ENCODE measurements at regions of chr20 and their contacts with region 1.

Region 1: GRCh38 chr20:2172305-2173175 is 70.9 kb downstream of the STK35 start:
- DNase-seq: peak; percentile 84
- H3K4me3 Mint-ChIP-seq: no peak overlapping the region
- H3K27ac Mint-ChIP-seq: no peak overlapping the region
- H3K4me1 Mint-ChIP-seq: peaks cover 3% of the 10 kb centered on the region
- H3K27me3 Mint-ChIP-seq: peaks cover 3% of the 10 kb centered on the region

Region 2: GRCh38 chr20:1764136-1765033 is 408.2 kb before region 1 on chr20:
- CTCF ChIA-PET with region 1: interaction called, 6 read pairs
- intact Hi-C with region 1: loop called (anchors 1 kb)
- DNase-seq: peak; percentile 82
- H3K4me3 Mint-ChIP-seq: no peak overlapping the region
- H3K27ac Mint-ChIP-seq: no peak overlapping the region
- H3K4me1 Mint-ChIP-seq: peaks cover 2% of the 10 kb centered on the region
- H3K27me3 Mint-ChIP-seq: no peaks in the 10 kb centered on the region

Region 3: GRCh38 chr20:1965520-1966351 is 206.8 kb before region 1 on chr20:
- CTCF ChIA-PET with region 1: interaction called, 61 read pairs
- intact Hi-C with region 1: loop called (anchors 1 kb)
- DNase-seq: peak; percentile 89
- H3K4me3 Mint-ChIP-seq: peak overlapping the region; percentile 54
- H3K27ac Mint-ChIP-seq: peak overlapping the region; percentile 43
- H3K4me1 Mint-ChIP-seq: peaks cover 14% of the 10 kb centered on the region
- H3K27me3 Mint-ChIP-seq: peaks cover 23% of the 10 kb centered on the region

Region 4: GRCh38 chr20:2005831-2006426 is 166.6 kb before region 1 on chr20:
- CTCF ChIA-PET with region 1: interaction called, 49 read pairs
- intact Hi-C with region 1: loop called (anchors 1 kb)
- DNase-seq: peak; percentile 84
- H3K4me3 Mint-ChIP-seq: no peak overlapping the region
- H3K27ac Mint-ChIP-seq: no peak overlapping the region
- H3K4me1 Mint-ChIP-seq: no peaks in the 10 kb centered on the region
- H3K27me3 Mint-ChIP-seq: peaks cover 25% of the 10 kb centered on the region

Region 5: GRCh38 chr20:2032155-2032554 is 140.4 kb before region 1 on chr20:
- CTCF ChIA-PET with region 1: interaction called, 10 read pairs
- intact Hi-C with region 1: no loop called
- DNase-seq: no peak
- H3K4me3 Mint-ChIP-seq: no peak overlapping the region
- H3K27ac Mint-ChIP-seq: no peak overlapping the region
- H3K4me1 Mint-ChIP-seq: no peaks in the 10 kb centered on the region
- H3K27me3 Mint-ChIP-seq: peaks cover 27% of the 10 kb centered on the region

Region 6: DNA sequence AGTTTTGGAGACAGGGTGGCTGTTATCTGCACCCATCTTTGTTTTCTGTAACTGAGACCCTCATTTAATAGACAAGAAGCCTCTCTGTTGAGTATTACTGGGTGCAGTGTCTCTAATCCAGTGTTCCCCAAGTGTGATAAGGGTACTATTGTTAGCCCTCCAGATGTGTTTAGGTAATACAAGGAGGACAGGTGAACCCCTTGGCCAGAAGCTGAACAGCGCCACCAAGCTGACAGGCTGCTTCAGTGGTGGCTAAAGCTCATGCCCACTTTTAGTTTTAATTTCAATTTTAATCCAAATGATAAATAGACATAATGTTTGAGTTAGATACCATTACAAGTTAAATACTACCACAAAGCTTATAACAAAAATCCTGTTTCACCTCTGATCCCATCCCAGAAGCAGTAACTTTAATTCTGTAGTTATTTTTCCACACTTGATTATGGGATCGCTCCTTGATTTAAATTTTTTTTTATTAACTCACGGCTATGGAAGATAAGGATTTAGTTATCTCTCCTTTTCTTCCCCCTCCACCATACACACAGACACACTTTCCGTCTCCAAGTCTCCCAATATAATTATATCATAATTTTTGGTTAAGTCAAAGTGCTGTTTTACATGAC is 79.3 kb before region 1 on chr20:
- CTCF ChIA-PET with region 1: interaction called, 3 read pairs
- intact Hi-C with region 1: loop called (anchors 2 kb)
- DNase-seq: peak; percentile 65
- H3K4me3 Mint-ChIP-seq: no peak overlapping the region
- H3K27ac Mint-ChIP-seq: no peak overlapping the region
- H3K4me1 Mint-ChIP-seq: no peaks in the 10 kb centered on the region
- H3K27me3 Mint-ChIP-seq: peaks cover 28% of the 10 kb centered on the region

Measured in activated naive CD4-positive, alpha-beta T cell treated with anti-CD3 and anti-CD28 coated beads for 36 hours (primary cell).